AG04449 (cell line): ENCODE measurements at regions of chr2 and their contacts with region 1.

Region 1: DNA sequence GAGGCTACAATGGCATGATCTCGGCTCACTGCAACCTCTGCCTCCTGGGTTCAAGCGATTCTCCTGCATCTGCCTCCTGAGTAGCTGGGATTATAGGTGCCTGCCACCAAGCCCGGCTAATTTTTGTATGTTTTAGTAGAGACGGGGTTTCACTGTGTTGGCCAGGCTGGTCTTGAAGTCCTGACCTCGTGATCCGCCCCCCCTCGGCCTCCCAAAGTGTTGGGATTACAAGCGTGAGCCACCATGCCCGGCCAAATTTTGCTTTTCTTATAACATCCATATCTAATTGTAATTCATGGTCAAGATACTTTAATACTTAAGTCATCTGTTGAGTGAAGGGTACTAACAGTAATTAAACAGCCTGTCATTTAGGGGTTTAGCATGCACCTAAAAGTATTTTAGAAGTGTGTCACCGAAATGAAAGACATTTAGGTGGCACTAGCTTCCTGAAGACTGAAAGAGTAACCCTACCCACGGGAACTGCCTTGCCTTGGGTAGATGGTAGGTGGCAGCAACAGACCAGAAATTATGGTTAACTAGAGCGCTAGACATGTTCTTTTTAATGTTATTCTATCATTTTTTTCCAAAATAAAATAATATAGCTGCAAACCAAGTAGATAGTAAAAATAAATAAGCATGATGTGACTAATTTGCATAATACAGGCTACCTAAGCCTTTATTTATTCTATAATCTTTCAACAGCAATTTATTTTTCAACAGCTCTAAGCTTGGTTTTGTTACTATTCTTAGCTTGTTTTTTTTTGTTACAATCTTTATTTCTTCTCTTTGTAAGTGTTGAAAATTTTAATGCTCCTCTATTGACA is 8.6 kb upstream of the ACYP2 start:
- DNase-seq: no peak
- H3K4me3 ChIP-seq: no peak overlapping the region
- CTCF ChIP-seq: peak; percentile 64

Region 2: GRCh38 chr2:53949457-53949856 is 157.4 kb before region 1 on chr2:
- CTCF ChIA-PET with region 1: no interaction called
- POLR2A ChIA-PET with region 1: no interaction called
- DNase-seq: no peak
- H3K4me3 ChIP-seq: no peak overlapping the region
- CTCF ChIP-seq: no peak

Region 3: GRCh38 chr2:54092940-54093339 is 13.9 kb before region 1 on chr2:
- CTCF ChIA-PET with region 1: interaction called, 22 read pairs
- POLR2A ChIA-PET with region 1: no interaction called
- DNase-seq: no peak
- H3K4me3 ChIP-seq: no peak overlapping the region
- CTCF ChIP-seq: no peak

Region 4: GRCh38 chr2:54161660-54162424 is 55.0 kb after region 1 on chr2:
- CTCF ChIA-PET with region 1: interaction called, 11 read pairs
- POLR2A ChIA-PET with region 1: no interaction called
- DNase-seq: no peak
- H3K4me3 ChIP-seq: no peak overlapping the region
- CTCF ChIP-seq: no peak

Region 5: GRCh38 chr2:54176577-54176976 is 69.7 kb after region 1 on chr2:
- CTCF ChIA-PET with region 1: interaction called, 11 read pairs
- POLR2A ChIA-PET with region 1: no interaction called
- DNase-seq: no peak
- H3K4me3 ChIP-seq: no peak overlapping the region
- CTCF ChIP-seq: peak; percentile 66

Region 6: DNA sequence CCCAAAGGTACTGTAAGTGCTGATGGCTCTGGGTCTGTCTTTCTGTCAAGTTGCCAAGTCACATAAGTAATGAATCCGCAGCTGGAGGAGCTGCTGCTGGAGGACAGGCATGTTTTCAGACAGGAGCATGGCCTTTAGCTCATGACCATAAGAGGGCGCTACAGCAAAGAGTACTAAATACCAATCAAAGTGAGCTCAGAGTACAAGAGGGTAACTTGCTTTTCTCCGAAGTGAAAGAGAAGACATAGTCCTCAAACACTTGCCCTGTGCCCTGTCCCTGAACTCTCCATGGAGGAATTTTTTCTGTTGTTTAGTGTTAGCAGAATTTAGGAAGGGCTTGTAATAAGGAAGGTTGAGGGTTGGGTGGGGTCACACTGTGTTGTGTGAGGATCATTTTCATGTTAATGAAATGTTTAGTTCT is 558.6 kb after region 1 on chr2:
- CTCF ChIA-PET with region 1: interaction called, 10 read pairs
- POLR2A ChIA-PET with region 1: no interaction called
- DNase-seq: no peak
- H3K4me3 ChIP-seq: no peak overlapping the region
- CTCF ChIP-seq: peak; percentile 45